Dendritic cell treated with granulocyte-macrophage colony-stimulating factor and Interleukin-4, amounts not matched to agents 40 ng/mL and 50 ng/mL, for 4 days (primary cell): ENCODE measurements at regions of chrX and their contacts with region 1.

Region 1: GRCh38 chrX:57929373-57929772 is 19.1 kb upstream of the ZXDA start:
- H3K4me3 Mint-ChIP-seq: no peak overlapping the region
- H3K27ac Mint-ChIP-seq: no peak overlapping the region
- H3K4me1 Mint-ChIP-seq: no peaks in the 10 kb centered on the region
- H3K27me3 Mint-ChIP-seq: no peaks in the 10 kb centered on the region

Region 2: GRCh38 chrX:57453901-57454300 is 475.5 kb before region 1 on chrX:
- intact Hi-C with region 1: no loop called
- H3K4me3 Mint-ChIP-seq: no peak overlapping the region
- H3K27ac Mint-ChIP-seq: no peak overlapping the region
- H3K4me1 Mint-ChIP-seq: no peaks in the 10 kb centered on the region
- H3K27me3 Mint-ChIP-seq: no peaks in the 10 kb centered on the region

Region 3: GRCh38 chrX:57573754-57574153 is 355.6 kb before region 1 on chrX:
- intact Hi-C with region 1: loop called (anchors 1 kb)
- H3K4me3 Mint-ChIP-seq: no peak overlapping the region
- H3K27ac Mint-ChIP-seq: no peak overlapping the region
- H3K4me1 Mint-ChIP-seq: peaks cover 5% of the 10 kb centered on the region
- H3K27me3 Mint-ChIP-seq: peaks cover 3% of the 10 kb centered on the region